ENCODE measurements at regions of chr17 and their contacts with region 1.

Region 1: DNA sequence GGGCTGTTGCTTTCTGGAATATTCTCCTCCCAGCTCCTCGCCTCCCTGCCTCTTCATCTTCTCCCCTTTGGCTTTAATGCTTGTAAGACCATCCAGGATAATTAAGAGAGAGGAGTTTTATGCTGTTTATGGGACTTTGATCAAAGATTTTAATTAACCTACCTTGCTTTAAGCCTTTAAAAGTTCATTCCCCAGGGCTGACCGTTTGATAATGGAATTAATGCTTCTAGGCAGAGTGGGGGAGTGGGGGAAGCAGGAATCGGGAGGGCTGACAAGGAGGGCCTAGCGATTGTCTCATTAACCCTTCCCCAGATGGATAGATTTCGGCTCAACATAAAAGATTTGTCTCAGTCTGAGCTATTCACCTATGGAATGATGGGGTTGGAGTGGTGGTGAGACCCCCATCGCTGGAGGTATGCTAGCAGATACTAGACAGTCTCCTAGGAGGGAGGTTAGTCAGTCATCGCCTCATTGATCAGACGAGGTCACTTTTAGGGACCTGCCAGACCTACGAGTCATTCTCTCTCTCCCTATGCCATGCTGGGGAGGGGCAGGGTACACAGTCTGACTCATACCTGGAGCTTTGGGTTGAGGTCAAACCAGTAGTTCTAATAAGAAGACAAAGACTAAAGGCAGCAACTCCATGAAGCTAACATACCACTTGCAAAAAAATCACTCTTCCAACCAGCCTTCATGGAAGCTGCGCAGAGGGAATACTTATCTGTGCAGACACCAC is 236.6 kb upstream of the NLRP1 start:
- DNase-seq: no peak
- ATAC-seq: no peak
- H3K4me3 ChIP-seq: no peak overlapping the region
- H3K27ac ChIP-seq: no peak overlapping the region
- H3K4me1 ChIP-seq: no peaks in the 10 kb centered on the region
- H3K27me3 ChIP-seq: no peaks in the 10 kb centered on the region
- CTCF ChIP-seq: no peak

Region 2: DNA sequence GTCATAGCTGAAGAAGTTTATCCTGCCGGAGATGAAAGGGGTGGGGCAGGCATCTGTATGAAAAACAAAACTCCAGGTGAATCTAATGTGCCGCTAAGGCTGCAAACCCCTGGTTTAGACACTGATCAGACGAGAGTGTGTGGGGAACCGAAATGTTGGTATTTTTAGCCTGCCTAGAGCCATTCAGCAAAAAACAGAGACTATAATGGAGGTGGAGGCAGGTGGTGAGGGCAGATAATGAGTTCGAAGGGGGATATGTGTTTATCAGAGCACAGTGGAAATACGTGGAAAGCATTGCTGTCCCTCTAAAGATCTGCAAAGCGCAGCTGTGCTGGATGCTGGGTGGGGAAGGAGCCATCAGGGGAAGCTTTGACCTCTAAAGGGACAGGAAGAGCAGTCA is 121.8 kb after region 1 on chr17:
- intact Hi-C with region 1: no loop called
- DNase-seq: no peak
- ATAC-seq: no peak
- H3K4me3 ChIP-seq: no peak overlapping the region
- H3K27ac ChIP-seq: no peak overlapping the region
- H3K4me1 ChIP-seq: no peaks in the 10 kb centered on the region
- H3K27me3 ChIP-seq: peaks cover 0 to 4% (median 0%) of the 10 kb centered on the region in 4 donors
- CTCF ChIP-seq: no peak

Region 3: GRCh38 chr17:6398955-6399354 is 578.1 kb after region 1 on chr17:
- intact Hi-C with region 1: loop called in 1 of 3 experiments (anchors 5 kb)
- DNase-seq: no peak
- ATAC-seq: no peak
- H3K4me3 ChIP-seq: no peak overlapping the region
- H3K27ac ChIP-seq: no peak overlapping the region
- H3K4me1 ChIP-seq: no peaks in the 10 kb centered on the region
- H3K27me3 ChIP-seq: peaks cover 0 to 3% (median 2%) of the 10 kb centered on the region in 4 donors
- CTCF ChIP-seq: no peak